CD4-positive, alpha-beta memory T cell (primary cell): ENCODE measurements at regions of chr1 and their contacts with region 1.

Region 1: DNA sequence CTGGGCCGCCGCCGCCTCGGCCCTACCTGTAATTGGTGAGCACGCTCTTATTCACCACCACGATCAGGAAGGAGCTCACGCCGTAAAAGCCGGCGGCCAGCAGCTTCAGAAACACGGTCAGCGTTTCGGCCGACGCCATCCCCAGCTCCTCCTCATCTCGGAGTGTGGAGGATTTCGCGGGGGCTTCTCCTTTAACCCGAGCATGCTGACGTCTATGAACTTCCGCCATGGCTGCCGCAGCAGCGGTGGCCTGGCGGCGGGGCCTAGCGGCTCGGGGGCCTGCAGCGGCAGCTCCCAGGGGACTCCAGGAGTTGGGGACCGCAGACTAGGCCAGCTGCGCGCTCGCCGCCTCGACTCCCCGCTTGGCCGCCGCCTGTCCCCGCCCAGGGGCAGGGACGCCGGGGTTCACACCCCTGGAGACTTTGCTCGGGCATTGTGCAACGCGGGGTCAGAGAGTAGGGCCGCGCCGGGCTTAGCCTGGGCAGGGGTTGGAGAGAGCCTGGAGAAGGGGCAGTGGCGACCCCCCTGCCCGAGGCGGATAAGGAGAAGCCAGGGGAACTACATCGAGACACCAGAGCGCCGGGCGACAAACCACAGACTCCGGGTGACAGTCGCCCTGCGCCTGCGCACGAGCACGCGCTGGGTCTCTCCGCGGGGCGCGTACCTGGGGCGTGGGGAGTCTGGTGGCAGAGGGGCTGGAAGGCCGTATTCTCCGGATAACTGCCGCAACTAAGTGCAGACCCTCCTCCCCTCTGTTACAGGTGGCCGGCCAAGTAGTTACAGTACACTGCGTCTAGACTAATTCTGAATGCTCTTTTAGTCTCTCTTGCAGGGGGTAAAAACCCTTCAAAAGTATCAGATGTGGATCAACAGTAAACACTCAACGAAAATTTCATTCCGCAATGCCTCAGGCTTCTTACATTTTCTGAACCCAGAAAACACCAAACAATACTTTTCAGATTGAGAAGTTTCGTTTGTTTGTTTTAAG is at the start of gene SLC35D1:
- DNase-seq: peak; percentile 68 to 82 (median 77)
- H3K4me3 ChIP-seq: peak within 1 kb of the TSS; percentile 73 to 88
- H3K4me3 Mint-ChIP-seq: peak within 1 kb of the TSS; percentile 93 to 96 (median 95)
- H3K27ac ChIP-seq: peak within 1 kb of the TSS; percentile 91
- H3K27ac Mint-ChIP-seq: peak within 1 kb of the TSS; percentile 66 to 98 (median 97)
- H3K4me1 ChIP-seq: peaks cover 25% of the 10 kb centered on the region
- H3K4me1 Mint-ChIP-seq: peaks cover 21 to 38% (median 28%) of the 10 kb centered on the region in 4 donors
- H3K27me3 ChIP-seq: no peaks in the 10 kb centered on the region
- H3K27me3 Mint-ChIP-seq: no peaks in the 10 kb centered on the region
- total RNA-seq, gene SLC35D1: 16.9 to 17.7 TPM

Region 2: DNA sequence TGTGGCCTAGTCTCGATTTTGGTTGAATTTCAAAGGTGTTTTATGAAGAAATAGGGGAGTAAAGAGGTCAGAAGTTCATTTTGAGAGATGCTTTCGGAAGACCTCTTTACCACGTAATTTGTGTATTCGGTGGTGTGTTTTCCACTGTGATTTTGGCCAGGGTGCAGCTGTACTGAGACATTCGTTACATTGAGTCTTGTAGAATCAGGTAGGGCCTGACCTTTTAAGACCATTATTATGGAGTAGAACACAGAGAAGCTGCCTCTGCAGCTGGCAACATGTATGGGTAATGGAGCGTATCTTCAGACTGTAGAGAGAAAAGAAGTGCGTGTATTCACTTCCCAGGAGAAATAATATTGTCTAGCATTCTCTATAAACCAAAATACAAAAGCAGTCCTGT is 934.9 kb before region 1 on chr1:
- CTCF ChIA-PET with region 1: no interaction called
- POLR2A ChIA-PET with region 1: no interaction called
- intact Hi-C with region 1: no loop called
- DNase-seq: no peak
- H3K4me3 ChIP-seq: no peak overlapping the region
- H3K4me3 Mint-ChIP-seq: no peak overlapping the region
- H3K27ac ChIP-seq: no peak overlapping the region
- H3K27ac Mint-ChIP-seq: no peak overlapping the region
- H3K4me1 ChIP-seq: no peaks in the 10 kb centered on the region
- H3K4me1 Mint-ChIP-seq: no peaks in the 10 kb centered on the region
- H3K27me3 ChIP-seq: no peaks in the 10 kb centered on the region
- H3K27me3 Mint-ChIP-seq: peaks cover 10 to 11% of the 10 kb centered on the region in 2 donors

Region 3: DNA sequence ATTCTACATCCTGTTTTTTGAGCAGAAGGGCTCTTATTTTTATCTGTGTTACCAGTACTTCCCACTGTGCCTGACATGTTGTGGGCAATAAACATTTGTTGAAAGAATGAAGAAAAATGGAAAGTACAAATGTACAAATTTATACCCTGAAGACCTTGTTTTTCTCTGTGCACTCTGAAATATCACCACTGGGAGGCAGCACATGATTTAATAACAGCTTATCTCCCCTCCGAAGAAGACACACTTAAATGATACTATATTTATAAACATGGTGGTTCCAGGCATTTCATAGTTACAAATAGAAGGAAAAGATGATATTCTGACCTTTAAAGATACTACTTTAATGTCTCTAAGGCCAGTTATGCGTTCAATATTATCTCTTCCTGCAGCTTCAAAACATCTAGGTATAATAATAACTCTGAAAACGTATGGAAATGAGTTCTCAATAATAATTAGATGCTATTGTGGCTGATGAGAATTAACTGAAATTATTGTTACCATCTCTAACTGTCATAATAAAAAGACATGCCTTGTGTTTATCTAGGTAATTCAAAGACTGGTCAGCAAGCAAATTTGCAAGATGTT is 289.0 kb before region 1 on chr1:
- CTCF ChIA-PET with region 1: interaction called, 3 read pairs
- POLR2A ChIA-PET with region 1: no interaction called
- intact Hi-C with region 1: loop called (anchors 5 kb)
- DNase-seq: peak; percentile 53 to 59 (median 54)
- H3K4me3 ChIP-seq: no peak overlapping the region
- H3K4me3 Mint-ChIP-seq: no peak overlapping the region
- H3K27ac ChIP-seq: no peak overlapping the region
- H3K27ac Mint-ChIP-seq: no peak overlapping the region
- H3K4me1 ChIP-seq: peaks cover 13% of the 10 kb centered on the region
- H3K4me1 Mint-ChIP-seq: peaks cover 13 to 17% (median 15%) of the 10 kb centered on the region in 4 donors
- H3K27me3 ChIP-seq: no peaks in the 10 kb centered on the region
- H3K27me3 Mint-ChIP-seq: no peaks in the 10 kb centered on the region

Region 4: GRCh38 chr1:66938613-66939012 is 115.5 kb before region 1 on chr1:
- CTCF ChIA-PET with region 1: no interaction called
- POLR2A ChIA-PET with region 1: no interaction called
- intact Hi-C with region 1: no loop called
- DNase-seq: no peak
- H3K4me3 ChIP-seq: no peak overlapping the region
- H3K4me3 Mint-ChIP-seq: peak overlapping the region in 4 of 8 donors; percentile 33 to 66 (median 52)
- H3K27ac ChIP-seq: no peak overlapping the region
- H3K27ac Mint-ChIP-seq: peak overlapping the region in 2 of 7 donors; percentile 17 to 47
- H3K4me1 ChIP-seq: peaks cover 94% of the 10 kb centered on the region
- H3K4me1 Mint-ChIP-seq: peaks cover 60 to 94% (median 76%) of the 10 kb centered on the region in 4 donors
- H3K27me3 ChIP-seq: no peaks in the 10 kb centered on the region
- H3K27me3 Mint-ChIP-seq: no peaks in the 10 kb centered on the region